B cell (primary cell): ENCODE measurements at regions of chr2 and their contacts with region 1.

Region 1: DNA sequence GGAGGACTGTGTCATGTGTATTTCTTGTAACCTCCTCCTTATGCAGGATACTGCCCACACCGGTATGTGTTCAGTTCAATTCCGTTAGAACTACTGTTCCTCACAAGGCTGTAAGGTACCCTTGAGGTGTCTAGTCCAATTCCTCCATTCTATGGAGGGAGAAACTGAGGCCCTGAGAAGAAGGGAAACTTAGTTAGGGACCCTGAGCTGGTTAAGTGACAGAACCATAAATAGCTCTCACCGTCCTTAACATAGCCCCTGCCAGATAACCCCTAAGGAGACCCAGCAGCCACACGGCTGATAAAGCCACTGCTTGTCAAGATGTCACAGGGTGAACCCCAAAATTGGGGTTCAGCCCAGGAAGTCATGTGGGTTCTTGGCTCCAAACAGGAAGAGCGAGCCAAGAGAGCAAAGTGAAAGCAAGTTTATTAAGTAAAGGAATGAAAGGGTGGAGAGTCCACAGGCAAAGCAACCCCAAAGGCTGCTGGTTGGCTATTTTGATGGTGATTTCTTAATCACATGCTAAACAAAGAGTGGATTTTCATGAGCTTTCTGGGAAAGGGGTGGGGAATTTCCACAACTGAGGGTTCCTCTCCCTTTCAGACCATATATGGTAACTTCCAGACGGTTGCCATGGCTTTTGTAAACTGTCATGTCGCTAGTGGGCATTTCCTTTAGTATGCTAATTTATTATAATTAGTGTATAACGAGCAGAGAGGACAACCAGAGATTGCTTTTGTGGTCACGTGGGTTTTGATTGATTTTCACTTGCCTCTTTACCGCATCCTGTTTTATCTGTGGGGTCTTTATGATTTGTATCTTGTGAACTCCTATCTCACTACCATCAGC is 83.4 kb upstream of the RTN4 start:
- DNase-seq: peak; percentile 89
- ATAC-seq: peak; percentile 78
- H3K4me3 ChIP-seq: peak overlapping the region; percentile 24 to 68 (median 49)
- H3K4me3 Mint-ChIP-seq: peak overlapping the region; percentile 95
- H3K27ac ChIP-seq: peak overlapping the region; percentile 75 to 91
- H3K27ac Mint-ChIP-seq: peak overlapping the region; percentile 94
- H3K4me1 ChIP-seq: peaks cover 27 to 41% of the 10 kb centered on the region in 2 donors
- H3K4me1 Mint-ChIP-seq: peaks cover 34% of the 10 kb centered on the region
- H3K27me3 ChIP-seq: no peaks in the 10 kb centered on the region
- H3K27me3 Mint-ChIP-seq: no peaks in the 10 kb centered on the region
- CTCF ChIP-seq: no peak

Region 2: GRCh38 chr2:55150834-55151233 is 17.1 kb after region 1 on chr2:
- CTCF ChIA-PET with region 1: interaction called, 5 read pairs
- POLR2A ChIA-PET with region 1: interaction called, 3 read pairs
- intact Hi-C with region 1: loop called (anchors 2 kb)
- DNase-seq: peak; percentile 81
- ATAC-seq: peak; percentile 94
- H3K4me3 ChIP-seq: no peak overlapping the region
- H3K4me3 Mint-ChIP-seq: peak overlapping the region; percentile 10
- H3K27ac ChIP-seq: no peak overlapping the region
- H3K27ac Mint-ChIP-seq: peak overlapping the region; percentile 91
- H3K4me1 ChIP-seq: peaks cover 36 to 53% of the 10 kb centered on the region in 2 donors
- H3K4me1 Mint-ChIP-seq: peaks cover 49% of the 10 kb centered on the region
- H3K27me3 ChIP-seq: no peaks in the 10 kb centered on the region
- H3K27me3 Mint-ChIP-seq: no peaks in the 10 kb centered on the region
- CTCF ChIP-seq: no peak